Pancreas (tissue), 10 donors: ENCODE measurements at regions of chr1 and their contacts with region 1.

Region 1: GRCh38 chr1:66242646-66243547 is 291.1 kb upstream of the SGIP1 start:
- DNase-seq: peak; percentile 70 to 89 (median 80)
- ATAC-seq: peak; percentile 97 to 100 (median 99)
- H3K4me3 ChIP-seq: no peak overlapping the region
- H3K27ac ChIP-seq: no peak overlapping the region
- H3K4me1 ChIP-seq: no peaks in the 10 kb centered on the region
- H3K27me3 ChIP-seq: peaks cover 0 to 3% (median 0%) of the 10 kb centered on the region in 4 donors
- CTCF ChIP-seq: peak; percentile 92 to 98 (median 94)

Region 2: GRCh38 chr1:65948609-65949229 is 294.2 kb before region 1 on chr1:
- intact Hi-C with region 1: loop called in 1 of 3 experiments (anchors 10 kb)
- DNase-seq: no peak
- ATAC-seq: peak in 3 of 4 donors; percentile 41 to 62 (median 45)
- H3K4me3 ChIP-seq: no peak overlapping the region
- H3K27ac ChIP-seq: no peak overlapping the region
- H3K4me1 ChIP-seq: no peaks in the 10 kb centered on the region
- H3K27me3 ChIP-seq: no peaks in the 10 kb centered on the region
- CTCF ChIP-seq: no peak

Region 3: GRCh38 chr1:65958561-65959350 is 284.1 kb before region 1 on chr1:
- intact Hi-C with region 1: loop called in 2 of 3 experiments (anchors 5 kb)
- DNase-seq: no peak
- ATAC-seq: peak in 3 of 4 donors; percentile 70 to 85 (median 79)
- H3K4me3 ChIP-seq: no peak overlapping the region
- H3K27ac ChIP-seq: no peak overlapping the region
- H3K4me1 ChIP-seq: no peaks in the 10 kb centered on the region
- H3K27me3 ChIP-seq: peaks cover 0 to 10% (median 7%) of the 10 kb centered on the region in 4 donors
- CTCF ChIP-seq: peak; percentile 18 to 58 (median 36)

Region 4: GRCh38 chr1:66393586-66394287 is 150.8 kb after region 1 on chr1:
- intact Hi-C with region 1: no loop called
- DNase-seq: no peak
- ATAC-seq: no peak
- H3K4me3 ChIP-seq: no peak overlapping the region
- H3K27ac ChIP-seq: no peak overlapping the region
- H3K4me1 ChIP-seq: no peaks in the 10 kb centered on the region
- H3K27me3 ChIP-seq: no peaks in the 10 kb centered on the region
- CTCF ChIP-seq: no peak

Region 5: GRCh38 chr1:66452162-66452561 is 209.3 kb after region 1 on chr1:
- intact Hi-C with region 1: loop called in 1 of 3 experiments (anchors 10 kb)
- DNase-seq: no peak
- ATAC-seq: no peak
- H3K4me3 ChIP-seq: no peak overlapping the region
- H3K27ac ChIP-seq: no peak overlapping the region
- H3K4me1 ChIP-seq: no peaks in the 10 kb centered on the region
- H3K27me3 ChIP-seq: no peaks in the 10 kb centered on the region
- CTCF ChIP-seq: no peak